ENCODE measurements at regions of chr3 and their contacts with region 1.

Region 1: GRCh38 chr3:184289426-184289938 is 9.6 kb upstream of the PSMD2 start:
- DNase-seq: peak; percentile 76
- ATAC-seq: peak; percentile 84
- H3K4me3 ChIP-seq: no peak overlapping the region
- H3K27ac ChIP-seq: no peak overlapping the region
- H3K4me1 ChIP-seq: peaks cover 0 to 5% of the 10 kb centered on the region in 2 experiments; a peak in 1 of 4 replicates
- H3K27me3 ChIP-seq: no peaks in the 10 kb centered on the region
- CTCF ChIP-seq: peak; percentile 75 to 97 (median 90)
- POLR2A ChIP-seq: no peak
- RAD21 ChIP-seq: peak; percentile 95

Region 2: DNA sequence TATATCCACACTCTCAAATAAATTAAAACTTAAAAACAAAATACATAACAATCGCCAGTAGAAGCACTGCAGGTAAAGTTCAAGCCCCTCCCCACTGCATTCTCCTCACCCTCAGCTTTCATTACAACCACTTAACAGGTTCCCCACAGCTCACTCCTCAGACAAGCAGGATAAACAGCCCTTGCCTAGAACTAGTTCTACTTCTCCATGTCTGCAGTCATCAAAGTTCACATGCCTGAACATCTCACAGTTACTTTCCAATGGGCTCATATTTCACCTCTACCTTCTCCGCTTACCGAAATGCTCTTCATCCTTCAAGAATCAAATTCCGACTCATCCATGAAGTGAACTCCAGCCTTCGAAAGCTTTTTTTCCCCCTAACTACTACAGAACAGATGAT is 587.7 kb before region 1 on chr3:
- CTCF ChIA-PET with region 1: no interaction called
- POLR2A ChIA-PET with region 1: no interaction called
- RAD21 ChIA-PET with region 1: no interaction called
- intact Hi-C with region 1: no loop called
- DNase-seq: no peak
- ATAC-seq: no peak
- H3K4me3 ChIP-seq: no peak overlapping the region
- H3K27ac ChIP-seq: no peak overlapping the region
- H3K4me1 ChIP-seq: peaks cover 0 to 18% of the 10 kb centered on the region in 2 experiments; a peak in 3 of 4 replicates
- H3K27me3 ChIP-seq: no peaks in the 10 kb centered on the region
- CTCF ChIP-seq: no peak
- POLR2A ChIP-seq: no peak
- RAD21 ChIP-seq: no peak

Region 3: GRCh38 chr3:183895296-183895695 is 394.2 kb before region 1 on chr3:
- CTCF ChIA-PET with region 1: interaction called, 21 read pairs
- POLR2A ChIA-PET with region 1: no interaction called
- RAD21 ChIA-PET with region 1: interaction called in 1 of 2 experiments, 3 read pairs
- intact Hi-C with region 1: loop called (anchors 2 kb)
- DNase-seq: peak; percentile 38
- ATAC-seq: peak; percentile 76
- H3K4me3 ChIP-seq: no peak overlapping the region
- H3K27ac ChIP-seq: no peak overlapping the region
- H3K4me1 ChIP-seq: no peaks in the 10 kb centered on the region
- H3K27me3 ChIP-seq: no peaks in the 10 kb centered on the region
- CTCF ChIP-seq: peak; percentile 77 to 84 (median 82)
- POLR2A ChIP-seq: no peak
- RAD21 ChIP-seq: peak; percentile 92

Region 4: GRCh38 chr3:184017672-184018423 is 271.6 kb before region 1 on chr3 and contains the start of gene ABCC5:
- CTCF ChIA-PET with region 1: interaction called, 4 read pairs
- POLR2A ChIA-PET with region 1: no interaction called
- RAD21 ChIA-PET with region 1: no interaction called
- intact Hi-C with region 1: loop called (anchors 10 kb)
- DNase-seq: peak; percentile 70
- ATAC-seq: peak; percentile 97
- H3K4me3 ChIP-seq: peak within 1 kb of the TSS; percentile 83 to 100
- H3K27ac ChIP-seq: peak within 1 kb of the TSS; percentile 71
- H3K4me1 ChIP-seq: peaks cover 4 to 13% of the 10 kb centered on the region in 2 experiments; a peak in 3 of 4 replicates
- H3K27me3 ChIP-seq: no peaks in the 10 kb centered on the region
- CTCF ChIP-seq: peak in 1 of 3 experiments; percentile 31; a peak in 1 of 6 replicates
- POLR2A ChIP-seq: peak; percentile 87
- RAD21 ChIP-seq: no peak
- total RNA-seq, gene ABCC5: 16.9 TPM

Region 5: DNA sequence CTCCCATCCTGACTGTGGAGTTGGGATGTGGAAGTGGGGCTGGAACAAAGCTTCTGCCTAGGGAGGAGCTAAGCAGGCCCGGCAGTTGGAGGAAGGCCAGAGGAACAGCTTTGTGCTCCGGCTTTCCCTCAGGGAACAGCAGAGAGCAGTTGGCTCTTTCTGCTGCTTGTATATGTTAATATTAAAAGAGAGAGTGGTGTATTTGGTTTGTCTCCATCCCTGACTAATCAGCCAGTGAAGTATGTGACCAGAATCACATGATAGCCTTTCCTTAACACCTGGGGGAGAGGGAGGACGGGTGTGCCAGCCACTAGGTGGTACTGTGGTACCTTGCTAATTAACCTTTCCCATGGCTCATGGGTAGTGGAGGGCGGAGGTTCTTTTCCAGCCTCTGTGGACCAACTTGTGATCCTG is 144.4 kb before region 1 on chr3:
- CTCF ChIA-PET with region 1: interaction called, 9 read pairs
- POLR2A ChIA-PET with region 1: no interaction called
- RAD21 ChIA-PET with region 1: interaction called, 3 read pairs
- intact Hi-C with region 1: loop called (anchors 1 kb)
- DNase-seq: no peak
- ATAC-seq: peak; percentile 92
- H3K4me3 ChIP-seq: no peak overlapping the region
- H3K27ac ChIP-seq: peak overlapping the region; percentile 11; the same call in 1 of the 2 replicates
- H3K4me1 ChIP-seq: peaks cover 0 to 17% of the 10 kb centered on the region in 2 experiments; a peak in 1 of 4 replicates
- H3K27me3 ChIP-seq: no peaks in the 10 kb centered on the region
- CTCF ChIP-seq: peak; percentile 70 to 78 (median 76)
- POLR2A ChIP-seq: no peak
- RAD21 ChIP-seq: peak; percentile 89

Region 6: DNA sequence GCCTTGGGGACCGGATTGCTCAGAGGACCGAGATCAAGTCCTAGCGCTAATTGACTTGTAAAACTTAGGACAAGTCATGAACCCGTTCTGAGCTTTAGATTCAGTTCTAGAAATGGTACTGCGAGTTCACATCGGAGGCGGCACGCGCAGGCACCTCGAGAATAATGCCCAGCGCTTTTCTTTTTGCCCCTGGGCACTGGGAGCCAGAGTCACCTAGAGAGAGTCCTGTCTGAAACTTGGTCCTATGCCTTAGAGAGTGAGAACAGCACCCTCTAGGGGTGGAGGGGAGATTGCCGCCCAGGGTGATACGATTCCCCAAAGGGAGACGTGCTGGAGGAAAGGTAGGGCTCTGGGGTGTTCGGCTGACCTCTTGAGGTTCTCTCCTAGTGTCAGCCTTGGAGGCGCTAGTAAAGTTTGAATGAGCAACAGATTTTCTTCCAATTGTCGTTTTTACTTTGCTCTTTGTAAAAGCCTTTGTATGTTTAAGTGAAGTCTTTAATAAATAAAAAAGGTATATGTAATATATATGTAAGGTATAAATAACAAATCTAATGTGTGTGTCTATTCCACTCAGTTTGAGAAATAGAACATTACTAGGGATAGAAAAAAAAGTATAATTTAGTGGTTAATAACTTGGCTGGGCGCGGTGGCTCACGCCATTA is 39.2 kb before region 1 on chr3:
- CTCF ChIA-PET with region 1: no interaction called
- POLR2A ChIA-PET with region 1: no interaction called
- RAD21 ChIA-PET with region 1: no interaction called
- intact Hi-C with region 1: loop called (anchors 1 kb)
- DNase-seq: peak; percentile 91
- ATAC-seq: peak; percentile 76
- H3K4me3 ChIP-seq: peak overlapping the region; percentile 89 to 100
- H3K27ac ChIP-seq: peak overlapping the region; percentile 82
- H3K4me1 ChIP-seq: peaks cover 3 to 9% of the 10 kb centered on the region in 2 experiments; a peak in 2 of 4 replicates
- H3K27me3 ChIP-seq: no peaks in the 10 kb centered on the region
- CTCF ChIP-seq: peak in 2 of 3 experiments; percentile 96 to 98; a peak in 4 of 6 replicates
- POLR2A ChIP-seq: no peak
- RAD21 ChIP-seq: no peak

Region 7: GRCh38 chr3:184795522-184796190 is 506.2 kb after region 1 on chr3:
- CTCF ChIA-PET with region 1: no interaction called
- POLR2A ChIA-PET with region 1: no interaction called
- RAD21 ChIA-PET with region 1: no interaction called
- intact Hi-C with region 1: no loop called
- DNase-seq: no peak
- ATAC-seq: no peak
- H3K4me3 ChIP-seq: no peak overlapping the region
- H3K27ac ChIP-seq: no peak overlapping the region
- H3K4me1 ChIP-seq: no peaks in the 10 kb centered on the region
- H3K27me3 ChIP-seq: no peaks in the 10 kb centered on the region
- CTCF ChIP-seq: no peak
- POLR2A ChIP-seq: no peak
- RAD21 ChIP-seq: no peak

Measured in HCT116 (cell line).